ENCODE measurements at regions of chr12 and their contacts with region 1.

Region 1: GRCh38 chr12:113512568-113512967 is 40.9 kb upstream of the LHX5 start:
- DNase-seq: no peak
- H3K4me3 Mint-ChIP-seq: no peak overlapping the region
- H3K27ac Mint-ChIP-seq: no peak overlapping the region
- H3K4me1 Mint-ChIP-seq: no peaks in the 10 kb centered on the region
- H3K27me3 Mint-ChIP-seq: peaks cover 96% of the 10 kb centered on the region
- CTCF ChIP-seq: no peak

Region 2: DNA sequence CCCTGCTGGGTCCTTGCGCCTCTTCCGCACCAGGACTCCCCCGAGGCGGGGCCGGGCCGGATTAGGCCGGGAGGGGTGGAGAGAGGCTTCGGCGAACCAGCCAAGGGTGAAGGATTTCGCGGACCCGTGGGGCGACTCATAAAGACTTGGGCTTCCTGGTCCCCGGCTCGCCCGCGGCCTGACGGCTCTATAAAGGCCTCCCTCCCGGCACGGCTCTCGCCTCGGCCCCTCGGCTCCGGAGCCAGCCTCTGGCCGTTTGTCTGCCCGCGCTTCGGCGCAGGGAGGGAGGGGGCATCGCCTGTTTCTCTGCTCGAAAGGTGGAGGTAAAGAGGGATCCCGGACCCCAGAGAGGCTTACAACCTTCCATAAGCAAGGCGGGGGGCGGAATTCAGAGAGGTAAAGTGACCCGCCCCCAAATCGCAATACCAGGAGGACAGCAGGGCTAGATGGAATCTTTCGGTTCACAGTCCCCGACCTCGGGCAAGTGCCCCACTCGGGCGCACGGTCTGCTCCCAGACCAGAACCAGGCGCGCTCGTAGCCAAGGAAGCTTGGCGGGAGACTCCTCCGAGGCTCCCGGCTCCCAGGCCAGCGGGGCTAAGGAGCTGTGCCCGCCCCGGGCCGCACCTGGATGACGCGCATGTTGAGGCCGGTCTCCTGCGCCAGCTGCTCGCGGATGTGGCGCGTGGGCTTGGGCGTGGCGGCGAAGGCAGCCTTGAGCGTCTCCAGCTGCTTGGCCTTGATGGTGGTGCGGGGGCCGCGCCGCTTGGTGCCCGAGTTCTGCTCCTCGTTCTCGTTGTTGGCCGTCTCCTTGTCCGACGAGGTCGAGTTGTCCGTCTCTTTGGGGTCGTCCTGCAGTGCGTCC is 44.8 kb before region 1 on chr12:
- CTCF ChIA-PET with region 1: no interaction called
- intact Hi-C with region 1: loop called (anchors 1 kb)
- DNase-seq: no peak
- H3K4me3 Mint-ChIP-seq: peak overlapping the region; percentile 53
- H3K27ac Mint-ChIP-seq: no peak overlapping the region
- H3K4me1 Mint-ChIP-seq: peaks cover 23% of the 10 kb centered on the region
- H3K27me3 Mint-ChIP-seq: peaks cover 96% of the 10 kb centered on the region
- CTCF ChIP-seq: no peak